ENCODE measurements at regions of chr9 and their contacts with region 1.

Region 1: DNA sequence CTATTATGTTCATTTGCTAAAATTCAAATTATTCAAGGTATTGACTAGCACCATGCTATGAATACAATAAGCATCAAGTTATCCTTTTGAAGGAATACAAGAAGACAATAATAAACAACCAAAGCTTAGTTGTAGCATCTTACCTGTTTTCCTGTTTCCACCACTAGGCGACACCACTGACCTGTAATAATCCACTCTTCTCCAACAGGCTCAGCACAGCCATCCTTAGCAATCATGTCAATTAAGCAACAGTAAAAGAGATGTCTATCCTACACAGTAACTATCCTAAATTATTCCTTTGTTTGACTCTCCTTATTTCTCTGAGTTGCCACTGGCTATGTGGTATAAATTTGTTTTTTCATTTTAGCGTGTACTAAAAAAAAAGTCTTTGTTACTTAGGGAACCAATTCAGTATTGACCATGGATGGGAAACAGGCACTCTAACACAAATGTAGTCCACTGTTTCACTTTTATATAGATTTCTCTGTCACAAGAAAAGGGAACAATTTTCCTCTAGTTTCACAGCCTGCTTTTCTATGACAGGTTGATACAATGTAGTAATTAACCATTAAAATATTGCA is 46.2 kb downstream of the PCA3 start:
- DNase-seq: peak; percentile 58
- ATAC-seq: no peak
- H3K4me3 Mint-ChIP-seq: no peak overlapping the region
- H3K27ac Mint-ChIP-seq: no peak overlapping the region
- H3K4me1 Mint-ChIP-seq: no peaks in the 10 kb centered on the region
- H3K27me3 Mint-ChIP-seq: peaks cover 17% of the 10 kb centered on the region
- CTCF ChIP-seq: peak; percentile 69

Region 2: GRCh38 chr9:76756268-76756640 is 54.2 kb before region 1 on chr9:
- CTCF ChIA-PET with region 1: no interaction called
- POLR2A ChIA-PET with region 1: no interaction called
- intact Hi-C with region 1: no loop called
- DNase-seq: no peak
- ATAC-seq: no peak
- H3K4me3 Mint-ChIP-seq: no peak overlapping the region
- H3K27ac Mint-ChIP-seq: no peak overlapping the region
- H3K4me1 Mint-ChIP-seq: no peaks in the 10 kb centered on the region
- H3K27me3 Mint-ChIP-seq: peaks cover 2% of the 10 kb centered on the region
- CTCF ChIP-seq: no peak

Region 3: GRCh38 chr9:76987594-76988200 is 177.2 kb after region 1 on chr9:
- CTCF ChIA-PET with region 1: interaction called, 4 read pairs
- POLR2A ChIA-PET with region 1: interaction called, 3 read pairs
- intact Hi-C with region 1: loop called (anchors 5 kb)
- DNase-seq: peak; percentile 20
- ATAC-seq: no peak
- H3K4me3 Mint-ChIP-seq: no peak overlapping the region
- H3K27ac Mint-ChIP-seq: no peak overlapping the region
- H3K4me1 Mint-ChIP-seq: no peaks in the 10 kb centered on the region
- H3K27me3 Mint-ChIP-seq: peaks cover 16% of the 10 kb centered on the region
- CTCF ChIP-seq: peak; percentile 15

Region 4: DNA sequence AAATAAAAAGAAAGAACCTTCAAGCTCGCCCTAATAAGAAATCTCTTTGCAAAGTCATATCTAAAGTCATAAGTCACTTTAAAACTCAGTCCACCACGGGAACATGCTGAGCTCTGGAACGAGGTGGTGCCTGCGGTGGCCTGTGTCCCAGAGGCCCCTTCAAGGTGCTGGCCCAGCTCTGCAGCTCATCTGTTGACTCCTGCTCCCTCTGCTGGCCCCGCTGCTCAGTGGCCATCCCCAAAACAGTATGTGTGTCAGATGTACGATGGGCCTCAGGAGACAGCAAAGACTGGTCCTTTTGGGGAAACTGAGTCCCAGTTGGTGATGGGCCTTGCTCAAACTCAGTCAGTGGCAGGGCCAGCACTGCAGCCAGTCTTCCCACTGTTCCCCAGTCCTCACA is 186.2 kb after region 1 on chr9:
- CTCF ChIA-PET with region 1: interaction called, 4 read pairs
- POLR2A ChIA-PET with region 1: no interaction called
- intact Hi-C with region 1: loop called (anchors 5 kb)
- DNase-seq: peak; percentile 37
- ATAC-seq: no peak
- H3K4me3 Mint-ChIP-seq: no peak overlapping the region
- H3K27ac Mint-ChIP-seq: no peak overlapping the region
- H3K4me1 Mint-ChIP-seq: no peaks in the 10 kb centered on the region
- H3K27me3 Mint-ChIP-seq: peaks cover 2% of the 10 kb centered on the region
- CTCF ChIP-seq: peak; percentile 33

Region 5: DNA sequence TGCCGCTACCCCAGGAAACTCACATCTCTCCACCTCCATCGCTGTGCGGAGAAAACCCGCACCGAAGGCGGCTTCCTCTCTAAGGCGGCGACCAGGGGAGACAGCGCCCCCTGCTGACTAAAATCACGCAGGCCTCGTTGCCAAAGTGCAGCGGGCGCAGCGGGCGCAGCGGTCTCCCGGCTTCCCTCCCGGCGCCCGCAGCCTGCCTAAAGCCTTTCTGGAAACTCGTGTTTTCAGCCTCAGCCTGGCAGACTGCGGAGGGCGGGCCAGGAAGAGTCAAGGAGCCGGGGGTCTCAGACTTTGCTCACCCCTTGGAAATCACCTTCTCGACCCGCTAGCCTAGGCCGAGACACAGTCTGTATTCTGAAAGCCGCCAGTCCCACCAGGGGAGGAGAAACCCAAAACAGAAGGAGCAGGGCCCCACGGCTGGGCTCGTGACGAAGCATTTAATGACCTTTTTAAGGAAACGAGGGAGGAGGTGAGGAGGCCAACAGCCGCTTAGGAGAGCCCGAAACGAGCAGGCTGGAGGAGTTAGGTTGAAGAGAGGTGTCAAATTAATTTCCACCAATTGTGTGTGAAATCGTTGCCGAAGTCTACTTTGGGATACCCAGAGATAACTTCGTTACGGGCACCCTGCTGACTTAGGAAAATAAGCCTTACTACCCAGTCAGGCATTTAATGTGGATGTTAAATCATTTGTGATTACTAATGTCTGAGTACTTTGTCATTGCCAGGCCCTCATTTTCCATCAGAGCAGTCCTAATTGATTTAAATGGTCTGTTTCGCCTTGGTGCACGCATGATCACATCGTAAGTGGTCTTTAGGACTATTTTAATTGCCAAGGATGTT is 201.7 kb after region 1 on chr9:
- CTCF ChIA-PET with region 1: interaction called, 7 read pairs
- POLR2A ChIA-PET with region 1: no interaction called
- intact Hi-C with region 1: loop called (anchors 2 kb)
- DNase-seq: peak; percentile 79
- ATAC-seq: peak; percentile 58
- H3K4me3 Mint-ChIP-seq: peak overlapping the region; percentile 36
- H3K27ac Mint-ChIP-seq: no peak overlapping the region
- H3K4me1 Mint-ChIP-seq: no peaks in the 10 kb centered on the region
- H3K27me3 Mint-ChIP-seq: peaks cover 67% of the 10 kb centered on the region
- CTCF ChIP-seq: peak; percentile 81

Region 6: DNA sequence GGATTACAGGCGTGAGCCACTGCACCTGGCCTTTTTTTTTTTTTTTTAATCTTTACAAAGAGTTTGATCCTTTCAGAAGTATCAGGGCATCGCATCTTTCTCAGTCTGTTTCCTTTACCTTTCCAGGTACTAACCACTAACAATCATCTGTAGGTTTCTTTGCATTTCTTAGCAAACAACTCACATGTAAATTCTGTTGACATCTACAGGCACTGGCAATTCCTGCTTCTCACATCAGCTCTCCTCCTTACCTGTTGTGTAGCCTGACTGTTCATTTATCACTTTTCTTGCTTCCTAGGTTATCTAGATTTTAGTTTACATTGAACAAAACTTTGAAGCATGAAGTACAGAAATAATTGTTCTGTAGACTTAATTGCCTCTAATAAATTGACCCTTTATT is 339.4 kb after region 1 on chr9:
- CTCF ChIA-PET with region 1: interaction called, 7 read pairs
- POLR2A ChIA-PET with region 1: no interaction called
- intact Hi-C with region 1: loop called (anchors 5 kb)
- DNase-seq: no peak
- ATAC-seq: no peak
- H3K4me3 Mint-ChIP-seq: no peak overlapping the region
- H3K27ac Mint-ChIP-seq: no peak overlapping the region
- H3K4me1 Mint-ChIP-seq: no peaks in the 10 kb centered on the region
- H3K27me3 Mint-ChIP-seq: peaks cover 21% of the 10 kb centered on the region
- CTCF ChIP-seq: no peak

Measured in activated CD8-positive, alpha-beta T cell treated with anti-CD3 and anti-CD28 coated beads for 36 hours (primary cell).